ENCODE measurements at regions of chr2 and their contacts with region 1.

Region 1: GRCh38 chr2:219498280-219499057 is at the start of gene GMPPA:
- DNase-seq: peak; percentile 95 to 97
- H3K4me3 ChIP-seq: peak within 1 kb of the TSS; percentile 57 to 72 (median 65)
- H3K27ac ChIP-seq: no peak within 1 kb of the TSS
- H3K4me1 ChIP-seq: peaks cover 9 to 41% (median 21%) of the 10 kb centered on the region in 4 experiments
- H3K27me3 ChIP-seq: peaks cover 20 to 40% (median 32%) of the 10 kb centered on the region in 4 experiments
- CTCF ChIP-seq: no peak; a peak in 1 of 4 replicates
- EP300 ChIP-seq: no peak
- POLR2A ChIP-seq: peak in 1 of 2 experiments; percentile 46; a peak in 1 of 3 replicates
- RAD21 ChIP-seq: no peak
- total RNA-seq, gene GMPPA: 34.3 and 35.3 TPM in 2 replicates

Region 2: GRCh38 chr2:219388127-219388844 is 110.2 kb before region 1 on chr2:
- CTCF ChIA-PET with region 1: interaction called, 10 read pairs
- POLR2A ChIA-PET with region 1: no interaction called
- DNase-seq: peak; percentile 81 to 97
- H3K4me3 ChIP-seq: peak overlapping the region; percentile 36 to 75 (median 54)
- H3K27ac ChIP-seq: no peak overlapping the region
- H3K4me1 ChIP-seq: peaks cover 0 to 14% (median 4%) of the 10 kb centered on the region in 4 experiments; a peak in 5 of 7 replicates
- H3K27me3 ChIP-seq: no peaks in the 10 kb centered on the region; a peak in 1 of 7 replicates
- CTCF ChIP-seq: peak; percentile 33 to 67 (median 50)
- EP300 ChIP-seq: no peak; a peak in 1 of 3 replicates
- POLR2A ChIP-seq: no peak
- RAD21 ChIP-seq: peak in 1 of 2 experiments; percentile 24; a peak in 1 of 4 replicates

Region 3: GRCh38 chr2:219484343-219485200 is 13.9 kb before region 1 on chr2:
- CTCF ChIA-PET with region 1: interaction called, 7,248 read pairs
- POLR2A ChIA-PET with region 1: interaction called, 66 read pairs
- DNase-seq: peak in 1 of 2 experiments; percentile 68
- H3K4me3 ChIP-seq: peak overlapping the region in 3 of 4 experiments; percentile 26 to 56 (median 32); a peak in 6 of 8 replicates
- H3K27ac ChIP-seq: no peak overlapping the region
- H3K4me1 ChIP-seq: peaks cover 6 to 36% (median 28%) of the 10 kb centered on the region in 4 experiments
- H3K27me3 ChIP-seq: peaks cover 20 to 49% (median 36%) of the 10 kb centered on the region in 4 experiments
- CTCF ChIP-seq: no peak; a peak in 1 of 4 replicates
- EP300 ChIP-seq: no peak
- POLR2A ChIP-seq: no peak
- RAD21 ChIP-seq: no peak

Region 4: DNA sequence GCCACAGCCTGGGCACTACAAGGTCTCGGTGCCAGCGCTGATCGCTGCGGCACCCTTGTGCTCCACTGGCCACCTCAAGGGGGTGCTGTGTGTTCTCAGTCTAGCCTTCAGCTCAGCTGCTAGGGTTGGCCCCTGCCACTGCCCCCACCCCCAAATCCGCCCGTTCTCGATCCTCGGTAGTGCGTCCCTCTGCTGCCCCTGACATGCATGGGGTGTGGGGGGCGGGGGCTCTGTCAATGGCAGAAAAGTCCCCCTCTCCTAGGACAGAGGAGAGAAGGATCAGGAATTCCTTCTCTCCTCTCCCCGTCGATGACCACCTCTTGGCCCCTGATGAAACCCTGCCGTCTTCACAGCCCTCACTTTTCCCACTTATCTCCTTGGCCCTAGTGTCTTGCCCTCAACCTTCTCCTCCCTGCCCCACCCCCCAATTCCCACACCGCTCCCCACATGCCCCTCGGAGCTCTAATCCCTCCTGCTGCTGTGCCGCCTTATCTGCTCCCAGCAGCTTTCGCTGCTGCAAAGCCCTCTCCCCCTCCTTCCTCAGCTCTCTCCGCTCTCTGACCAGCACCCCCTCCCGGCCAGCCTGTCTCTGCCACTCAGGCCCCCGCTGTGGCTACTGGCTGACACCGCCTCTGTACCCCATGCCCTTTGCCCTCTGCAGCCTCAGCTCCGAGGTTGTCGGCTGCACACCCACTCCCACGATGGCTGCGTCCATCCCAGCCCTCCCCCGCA is 11.5 kb after region 1 on chr2:
- CTCF ChIA-PET with region 1: interaction called, 7,248 read pairs
- POLR2A ChIA-PET with region 1: interaction called, 216 read pairs
- DNase-seq: peak in 1 of 2 experiments; percentile 91
- H3K4me3 ChIP-seq: peak overlapping the region; percentile 27 to 56 (median 50); a peak in 7 of 8 replicates
- H3K27ac ChIP-seq: no peak overlapping the region
- H3K4me1 ChIP-seq: peaks cover 7 to 76% (median 65%) of the 10 kb centered on the region in 4 experiments
- H3K27me3 ChIP-seq: peaks cover 2 to 37% (median 34%) of the 10 kb centered on the region in 4 experiments
- CTCF ChIP-seq: peak in 2 of 3 experiments; percentile 70 to 89; a peak in 3 of 4 replicates
- EP300 ChIP-seq: no peak
- POLR2A ChIP-seq: no peak
- RAD21 ChIP-seq: peak; percentile 38 to 57; a peak in 3 of 4 replicates

Region 5: DNA sequence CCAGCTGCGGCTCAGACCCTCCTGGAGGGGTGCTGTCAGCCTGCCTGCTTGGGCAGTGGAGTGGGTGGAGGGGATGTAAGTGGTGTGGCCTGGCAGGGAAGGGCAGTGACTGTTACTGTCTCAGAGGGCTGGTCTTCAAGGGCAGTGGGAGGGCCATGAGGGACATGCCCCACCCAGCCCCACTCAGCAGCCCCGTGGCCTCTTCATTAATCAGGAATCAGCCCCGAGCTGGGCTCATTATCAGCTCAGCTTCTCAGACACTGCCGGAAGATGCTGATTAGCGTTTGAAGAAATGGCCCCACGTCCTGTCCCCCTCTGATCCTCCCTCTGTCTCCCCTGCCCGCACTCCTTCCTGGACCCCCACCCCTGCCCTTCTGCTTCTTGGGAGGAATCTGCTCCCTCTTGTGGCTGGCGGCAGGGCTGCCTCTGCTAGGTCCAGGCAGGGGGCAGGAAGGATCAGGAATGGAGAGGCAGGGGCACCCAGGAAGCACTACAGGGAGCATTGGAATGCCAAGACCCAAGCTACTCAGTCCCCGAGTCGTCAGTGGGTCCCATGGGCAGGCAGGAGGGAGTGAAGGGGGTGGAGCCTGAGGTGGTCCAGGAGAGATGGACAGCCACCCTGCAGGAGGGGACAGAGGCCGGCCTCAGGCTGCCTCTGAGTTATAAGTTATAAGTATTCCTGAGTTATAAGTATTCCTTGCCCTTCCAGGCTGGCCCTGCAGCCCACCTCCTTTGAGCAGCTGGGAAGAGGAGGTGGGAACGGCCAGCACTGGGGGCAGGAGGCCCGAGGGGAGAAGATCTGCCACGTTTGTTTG is 22.8 kb after region 1 on chr2:
- CTCF ChIA-PET with region 1: interaction called, 7,248 read pairs
- POLR2A ChIA-PET with region 1: interaction called, 216 read pairs
- DNase-seq: peak in 1 of 2 experiments; percentile 86
- H3K4me3 ChIP-seq: peak overlapping the region in 1 of 4 experiments; percentile 63; a peak in 1 of 8 replicates
- H3K27ac ChIP-seq: no peak overlapping the region
- H3K4me1 ChIP-seq: peaks cover 0 to 28% (median 19%) of the 10 kb centered on the region in 4 experiments; a peak in 6 of 7 replicates
- H3K27me3 ChIP-seq: peaks cover 0 to 14% (median 4%) of the 10 kb centered on the region in 4 experiments; a peak in 3 of 7 replicates
- CTCF ChIP-seq: peak in 2 of 3 experiments; percentile 92 to 94; a peak in 3 of 4 replicates
- EP300 ChIP-seq: 0 out of 3 replicates have a peak, but pooled peaks of 1 of the 2 experiments have one; percentile 54
- POLR2A ChIP-seq: no peak
- RAD21 ChIP-seq: peak; percentile 64 to 79

Region 6: DNA sequence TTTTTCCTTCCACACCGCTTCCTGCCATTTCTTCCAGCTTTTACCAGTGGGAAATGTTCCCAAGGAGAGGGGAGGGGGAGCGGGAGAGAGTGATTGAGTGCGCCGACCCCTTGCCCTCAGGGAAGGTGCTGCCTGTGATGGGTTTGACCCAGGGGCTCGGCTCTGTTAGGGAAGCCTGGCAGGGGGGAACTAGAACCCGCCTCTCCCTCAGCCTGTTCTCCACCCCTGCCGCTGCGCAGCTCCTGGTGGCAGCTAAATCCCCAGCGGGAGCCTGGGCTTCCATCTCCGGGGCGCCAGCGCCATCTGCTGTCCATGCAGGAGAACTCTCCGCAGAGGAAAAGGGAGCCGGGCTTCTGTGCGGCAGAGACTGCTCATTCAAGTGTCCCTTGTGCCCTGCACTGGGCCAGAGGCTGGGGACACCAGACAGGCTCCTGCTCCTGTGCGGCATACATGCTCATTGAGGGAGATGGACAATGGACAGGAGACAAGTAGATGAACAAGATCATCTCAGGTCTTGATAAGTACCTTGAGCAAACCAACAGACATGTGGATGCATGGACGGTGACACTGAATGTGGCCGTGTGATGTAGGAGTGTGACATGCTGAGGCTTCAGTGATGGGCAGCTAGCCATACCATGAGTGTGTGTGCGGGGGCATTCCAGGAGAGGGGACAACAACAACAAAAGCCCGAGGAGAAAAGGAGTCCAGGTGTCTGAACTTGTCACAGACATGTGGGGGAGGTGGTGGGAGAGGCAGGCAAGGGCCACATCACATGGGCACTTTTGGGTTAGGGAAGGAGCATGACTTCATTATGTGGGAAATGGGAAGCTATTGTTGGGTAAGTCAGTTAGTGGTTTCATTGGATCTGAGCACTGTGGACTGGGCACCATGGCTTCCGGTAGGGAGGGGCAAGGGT is 31.8 kb after region 1 on chr2:
- CTCF ChIA-PET with region 1: interaction called, 7,248 read pairs
- POLR2A ChIA-PET with region 1: interaction called, 16 read pairs
- DNase-seq: peak in 1 of 2 experiments; percentile 97
- H3K4me3 ChIP-seq: peak overlapping the region in 2 of 4 experiments; percentile 22 to 56; a peak in 4 of 8 replicates
- H3K27ac ChIP-seq: no peak overlapping the region
- H3K4me1 ChIP-seq: peaks cover 0 to 8% (median 3%) of the 10 kb centered on the region in 4 experiments; a peak in 4 of 7 replicates
- H3K27me3 ChIP-seq: peaks cover 0 to 24% (median 10%) of the 10 kb centered on the region in 4 experiments; a peak in 6 of 7 replicates
- CTCF ChIP-seq: peak in 2 of 3 experiments; percentile 96 to 99; a peak in 3 of 4 replicates
- EP300 ChIP-seq: no peak
- POLR2A ChIP-seq: no peak
- RAD21 ChIP-seq: peak; percentile 99 to 100

Region 7: DNA sequence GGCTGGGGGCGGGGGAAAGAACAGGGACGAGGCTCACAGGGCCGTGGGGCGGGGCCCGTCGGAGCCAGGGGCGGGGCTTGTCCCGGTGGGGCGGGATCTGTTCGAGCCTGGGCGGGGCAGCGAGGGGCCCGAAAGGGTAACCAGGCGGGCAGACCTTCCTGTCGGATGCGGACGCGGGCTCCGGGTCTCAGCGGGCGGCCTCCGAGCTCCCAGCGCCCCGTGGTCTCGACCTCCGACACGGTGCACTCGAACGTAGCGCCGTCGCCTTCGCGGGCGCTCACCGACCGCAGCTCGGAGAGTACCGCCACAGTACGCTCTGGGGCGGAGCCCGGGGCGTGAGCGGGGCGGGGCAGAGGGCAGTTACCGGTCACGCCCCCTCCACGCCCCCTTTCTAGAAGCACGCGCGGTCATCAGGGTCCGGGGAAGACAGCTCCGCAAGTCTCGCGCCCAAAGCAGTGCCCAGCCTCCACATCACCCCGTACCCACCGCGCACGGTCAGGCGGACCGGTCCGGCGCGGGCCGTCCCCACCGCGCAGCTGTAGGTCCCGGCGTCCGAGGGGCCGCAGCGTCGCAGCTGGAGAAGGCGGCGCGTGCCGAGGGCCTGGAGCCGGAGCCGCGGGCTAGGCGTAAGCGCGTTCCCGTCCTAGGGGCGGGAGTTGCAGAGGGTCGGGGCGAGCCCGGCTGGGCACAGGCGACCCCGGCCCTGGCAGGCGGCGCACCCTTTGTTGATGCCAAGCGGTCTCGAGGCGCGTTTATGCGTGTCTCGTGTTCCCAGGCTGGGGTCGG is 54.1 kb after region 1 on chr2:
- CTCF ChIA-PET with region 1: interaction called, 11 read pairs
- POLR2A ChIA-PET with region 1: no interaction called
- DNase-seq: peak in 1 of 2 experiments; percentile 100
- H3K4me3 ChIP-seq: peak overlapping the region; percentile 58 to 77 (median 68)
- H3K27ac ChIP-seq: no peak overlapping the region; the same call in 1 of the 2 replicates
- H3K4me1 ChIP-seq: peaks cover 0 to 15% (median 8%) of the 10 kb centered on the region in 4 experiments; a peak in 6 of 7 replicates
- H3K27me3 ChIP-seq: peaks cover 0 to 15% (median 13%) of the 10 kb centered on the region in 4 experiments; a peak in 6 of 7 replicates
- CTCF ChIP-seq: no peak
- EP300 ChIP-seq: no peak
- POLR2A ChIP-seq: peak in 1 of 2 experiments; percentile 80; a peak in 2 of 3 replicates
- RAD21 ChIP-seq: no peak

Region 8: GRCh38 chr2:219783359-219783975 is 285.0 kb after region 1 on chr2:
- CTCF ChIA-PET with region 1: no interaction called
- POLR2A ChIA-PET with region 1: no interaction called
- DNase-seq: no peak
- H3K4me3 ChIP-seq: no peak overlapping the region
- H3K27ac ChIP-seq: no peak overlapping the region
- H3K4me1 ChIP-seq: no peaks in the 10 kb centered on the region
- H3K27me3 ChIP-seq: no peaks in the 10 kb centered on the region
- CTCF ChIP-seq: no peak
- EP300 ChIP-seq: no peak
- POLR2A ChIP-seq: no peak
- RAD21 ChIP-seq: no peak